ENCODE measurements at regions of chrX and their contacts with region 1.

Region 1: GRCh38 chrX:103774070-103774642 is 2.5 kb upstream of the PLP1 start:
- DNase-seq: no peak
- H3K4me3 ChIP-seq: no peak overlapping the region
- H3K27me3 ChIP-seq: no peaks in the 10 kb centered on the region
- CTCF ChIP-seq: peak; percentile 49

Region 2: GRCh38 chrX:103686199-103687072 is 87.7 kb before region 1 on chrX and contains the start of gene MORF4L2:
- CTCF ChIA-PET with region 1: interaction called, 24 read pairs
- POLR2A ChIA-PET with region 1: no interaction called
- DNase-seq: peak; percentile 98
- H3K4me3 ChIP-seq: peak within 1 kb of the TSS; percentile 71
- H3K27me3 ChIP-seq: no peaks in the 10 kb centered on the region
- CTCF ChIP-seq: no peak
- polyA plus RNA-seq, gene MORF4L2: 479 and 701 TPM in 2 replicates

Region 3: GRCh38 chrX:103711533-103712369 is 62.4 kb before region 1 on chrX:
- CTCF ChIA-PET with region 1: interaction called, 36 read pairs
- POLR2A ChIA-PET with region 1: no interaction called
- DNase-seq: no peak
- H3K4me3 ChIP-seq: no peak overlapping the region
- H3K27me3 ChIP-seq: no peaks in the 10 kb centered on the region
- CTCF ChIP-seq: peak; percentile 70

Region 4: DNA sequence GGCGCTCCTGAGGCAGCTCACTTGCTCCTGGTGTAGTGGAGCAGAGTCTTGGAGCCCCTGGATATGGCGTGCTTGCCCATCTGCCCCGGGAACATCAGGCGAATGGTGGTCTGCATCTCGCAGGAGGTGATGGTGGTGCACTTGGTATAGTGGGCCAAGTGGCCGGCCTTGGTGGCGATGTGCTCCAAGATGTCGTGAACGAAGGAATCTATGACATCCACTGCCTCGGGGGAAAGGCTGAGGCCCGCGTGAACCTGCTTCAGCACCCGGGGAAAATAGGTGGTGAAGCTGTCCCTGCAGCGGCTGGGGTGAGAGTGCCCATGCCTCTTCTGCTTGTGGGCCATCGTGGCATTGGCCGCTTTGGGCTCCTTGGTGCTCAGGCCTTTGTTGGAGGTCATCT is 130.1 kb after region 1 on chrX:
- CTCF ChIA-PET with region 1: no interaction called
- POLR2A ChIA-PET with region 1: no interaction called
- DNase-seq: no peak
- H3K4me3 ChIP-seq: no peak overlapping the region
- H3K27me3 ChIP-seq: no peaks in the 10 kb centered on the region
- CTCF ChIP-seq: no peak

Measured in BJ (cell line).